ENCODE measurements at regions of chr1 and their contacts with region 1.

Region 1: GRCh38 chr1:156445789-156446263 is 54.7 kb downstream of the MEF2D start:
- DNase-seq: peak; percentile 67
- H3K4me3 Mint-ChIP-seq: no peak overlapping the region
- H3K27ac Mint-ChIP-seq: no peak overlapping the region
- H3K4me1 Mint-ChIP-seq: peaks cover 25% of the 10 kb centered on the region
- H3K27me3 Mint-ChIP-seq: peaks cover 56% of the 10 kb centered on the region

Region 2: DNA sequence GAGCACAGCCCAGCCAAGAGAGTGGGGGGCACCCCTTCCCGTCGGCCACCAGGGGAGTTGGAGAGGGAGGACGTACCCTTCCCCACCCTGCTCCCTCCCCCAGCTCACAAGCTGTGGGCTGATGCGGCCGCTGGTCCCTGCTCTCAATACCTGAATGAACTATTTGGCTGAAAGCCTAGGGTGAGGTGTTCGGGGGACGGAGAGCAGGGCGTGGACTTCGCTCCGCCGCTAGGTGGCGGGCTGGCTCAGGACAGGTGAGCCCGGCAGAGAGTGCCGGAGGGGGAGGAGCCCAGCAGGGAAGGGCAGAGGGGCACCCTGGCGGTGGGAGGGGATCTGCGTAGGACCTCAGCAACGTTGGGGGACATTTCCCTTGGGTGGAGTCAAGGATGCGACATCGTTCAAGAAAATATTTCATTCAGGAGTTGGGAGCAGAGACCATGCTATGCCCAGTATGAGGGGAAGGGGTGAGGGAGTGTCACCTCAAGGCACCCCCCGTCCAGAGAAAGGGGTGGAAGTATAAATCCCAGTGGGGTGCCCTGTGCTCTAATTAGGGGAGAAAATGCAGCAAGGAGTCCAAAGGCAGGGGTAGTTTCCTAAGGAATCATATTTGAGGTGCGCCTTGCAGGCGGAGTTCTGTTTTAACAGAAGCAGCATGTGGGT is 88.8 kb before region 1 on chr1:
- intact Hi-C with region 1: loop called (anchors 1 kb)
- DNase-seq: peak; percentile 59
- H3K4me3 Mint-ChIP-seq: no peak overlapping the region
- H3K27ac Mint-ChIP-seq: no peak overlapping the region
- H3K4me1 Mint-ChIP-seq: peaks cover 8% of the 10 kb centered on the region
- H3K27me3 Mint-ChIP-seq: peaks cover 45% of the 10 kb centered on the region

Region 3: GRCh38 chr1:156385534-156386031 is 60.2 kb before region 1 on chr1:
- intact Hi-C with region 1: loop called (anchors 1 kb)
- DNase-seq: peak; percentile 59
- H3K4me3 Mint-ChIP-seq: no peak overlapping the region
- H3K27ac Mint-ChIP-seq: no peak overlapping the region
- H3K4me1 Mint-ChIP-seq: peaks cover 5% of the 10 kb centered on the region
- H3K27me3 Mint-ChIP-seq: peaks cover 34% of the 10 kb centered on the region

Region 4: DNA sequence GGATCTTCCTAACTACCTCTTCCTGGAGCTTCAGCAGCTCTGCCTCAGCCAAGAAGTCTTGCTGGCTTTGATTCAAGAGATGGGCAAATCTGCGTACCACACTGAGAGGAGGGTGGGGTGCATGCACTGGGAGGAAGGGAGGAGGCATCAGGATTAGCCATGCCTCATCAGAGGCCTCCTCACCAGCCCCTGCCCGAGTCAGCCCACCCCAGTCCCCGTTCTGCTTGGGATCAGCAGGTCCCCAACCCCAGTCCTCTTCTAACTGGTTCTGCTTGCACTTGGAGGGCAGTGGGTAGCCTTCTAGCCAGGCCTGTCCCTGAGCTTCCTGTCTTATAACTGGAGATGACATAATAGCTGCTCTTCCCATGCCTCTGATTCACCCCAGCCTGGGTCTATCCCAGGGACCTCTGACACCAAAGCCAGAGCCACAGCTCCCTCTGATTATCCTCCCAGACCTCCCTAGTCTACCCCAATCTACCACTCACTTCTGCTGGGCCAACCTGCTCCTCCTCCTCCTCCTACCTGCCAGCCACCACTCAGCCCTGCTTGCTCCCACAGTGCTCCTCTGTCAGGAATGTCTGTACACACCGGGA is 95.1 kb after region 1 on chr1:
- intact Hi-C with region 1: no loop called
- DNase-seq: no peak
- H3K4me3 Mint-ChIP-seq: no peak overlapping the region
- H3K27ac Mint-ChIP-seq: peak overlapping the region; percentile 13
- H3K4me1 Mint-ChIP-seq: peaks cover 11% of the 10 kb centered on the region
- H3K27me3 Mint-ChIP-seq: no peaks in the 10 kb centered on the region

Region 5: DNA sequence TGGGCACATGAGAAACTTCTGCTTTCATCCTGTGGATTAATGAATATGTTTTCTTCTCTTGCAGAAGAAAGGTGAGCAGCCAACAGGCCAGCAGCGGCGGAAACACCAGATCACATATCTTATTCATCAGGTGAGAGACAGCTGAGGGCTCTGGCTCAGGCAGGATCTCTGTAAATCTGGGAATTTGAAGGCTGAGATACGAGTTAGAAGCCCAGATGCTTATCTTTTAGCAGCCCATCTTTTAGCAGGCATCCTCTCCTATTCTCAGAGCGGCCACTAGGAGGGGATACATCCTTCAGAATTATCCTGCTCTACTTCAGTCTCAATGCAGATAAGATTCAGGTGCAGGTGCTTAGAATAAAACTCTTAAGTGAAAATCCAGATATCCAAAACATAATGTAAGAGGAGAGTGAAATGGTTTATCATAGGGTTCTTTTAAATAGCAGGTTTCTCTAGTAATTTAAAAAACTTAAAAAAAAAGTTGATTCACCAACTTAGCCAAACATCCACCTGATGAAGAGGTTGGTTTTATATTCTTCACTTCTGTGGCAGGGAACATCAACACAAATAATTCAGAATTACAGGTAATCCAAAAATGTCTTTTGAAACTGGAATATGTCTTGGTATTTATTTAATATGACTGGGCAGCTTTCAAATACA is 351.5 kb after region 1 on chr1:
- intact Hi-C with region 1: no loop called
- DNase-seq: peak; percentile 43
- H3K4me3 Mint-ChIP-seq: no peak overlapping the region
- H3K27ac Mint-ChIP-seq: no peak overlapping the region
- H3K4me1 Mint-ChIP-seq: peaks cover 27% of the 10 kb centered on the region
- H3K27me3 Mint-ChIP-seq: no peaks in the 10 kb centered on the region